IMR-90 (cell line): ENCODE measurements at regions of chr7 and their contacts with region 1.

Region 1: GRCh38 chr7:73921623-73922528 is 60.9 kb downstream of the TMEM270 start:
- DNase-seq: no peak
- ATAC-seq: no peak
- H3K4me3 ChIP-seq: no peak overlapping the region
- H3K27ac ChIP-seq: no peak overlapping the region
- H3K4me1 ChIP-seq: peaks cover 2% of the 10 kb centered on the region; the same call in 1 of the 2 replicates
- H3K27me3 ChIP-seq: peaks cover 13% of the 10 kb centered on the region
- CTCF ChIP-seq: no peak
- POLR2A ChIP-seq: no peak
- RAD21 ChIP-seq: no peak

Region 2: DNA sequence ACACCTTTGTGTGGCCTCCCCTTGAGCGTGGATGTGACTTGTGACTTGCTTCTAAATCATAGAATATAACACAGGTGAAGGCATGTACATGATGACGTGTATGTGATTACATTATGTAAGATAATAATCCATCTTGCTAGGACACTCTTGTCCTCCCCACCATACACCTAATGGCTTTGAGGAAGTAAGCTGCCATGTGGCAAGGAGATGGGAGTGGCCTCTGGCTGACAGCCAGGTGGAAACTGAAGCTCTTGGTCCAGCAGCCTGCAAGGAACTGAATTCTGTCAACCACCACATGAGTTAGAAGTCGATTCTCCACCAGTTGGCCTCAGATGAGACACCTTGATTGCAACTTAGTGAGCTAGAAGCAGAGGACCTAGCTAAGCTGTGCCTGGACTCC is 38.7 kb after region 1 on chr7:
- CTCF ChIA-PET with region 1: no interaction called
- POLR2A ChIA-PET with region 1: no interaction called
- dilution Hi-C with region 1: no loop called
- in situ Hi-C with region 1: no loop called
- intact Hi-C with region 1: loop called (anchors 5 kb)
- DNase-seq: no peak
- ATAC-seq: no peak
- H3K4me3 ChIP-seq: no peak overlapping the region
- H3K27ac ChIP-seq: no peak overlapping the region
- H3K4me1 ChIP-seq: no peaks in the 10 kb centered on the region
- H3K27me3 ChIP-seq: peaks cover 4% of the 10 kb centered on the region; the same call in 1 of the 2 replicates
- CTCF ChIP-seq: no peak
- POLR2A ChIP-seq: no peak
- RAD21 ChIP-seq: no peak